OCI-LY7 (cell line): ENCODE measurements at regions of chr3 and their contacts with region 1.

Region 1: GRCh38 chr3:191702121-191702520 is 241.2 kb downstream of the PYDC2 start:
- DNase-seq: peak; percentile 2
- H3K4me3 ChIP-seq: no peak overlapping the region
- H3K27ac ChIP-seq: no peak overlapping the region
- H3K4me1 ChIP-seq: no peaks in the 10 kb centered on the region
- CTCF ChIP-seq: 0 out of 2 replicates have a peak, but pooled peaks have one; percentile 40

Region 2: DNA sequence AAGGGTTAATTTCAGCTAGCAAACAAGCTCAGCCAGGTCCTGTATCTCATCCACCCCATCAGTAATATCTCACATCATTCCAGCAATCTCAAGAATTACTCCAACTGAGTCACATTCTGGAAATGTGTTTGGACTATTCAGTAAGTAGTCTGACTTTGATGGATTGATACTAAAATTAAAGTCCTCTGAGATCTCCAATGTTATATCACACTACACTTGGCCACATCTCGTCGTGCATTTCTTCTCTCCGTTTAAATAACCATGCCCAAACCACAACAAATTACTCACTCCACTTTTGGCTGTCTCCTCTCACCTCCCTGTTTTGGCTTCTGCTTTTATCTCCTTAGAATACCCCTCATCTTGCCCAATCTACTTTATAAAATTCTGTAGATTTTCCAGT is 51.1 kb after region 1 on chr3:
- CTCF ChIA-PET with region 1: no interaction called
- POLR2A ChIA-PET with region 1: no interaction called
- intact Hi-C with region 1: loop called (anchors 10 kb)
- DNase-seq: no peak
- H3K4me3 ChIP-seq: no peak overlapping the region
- H3K27ac ChIP-seq: no peak overlapping the region
- H3K4me1 ChIP-seq: no peaks in the 10 kb centered on the region
- CTCF ChIP-seq: no peak